ENCODE measurements at regions of chr17 and their contacts with region 1.

Region 1: GRCh38 chr17:76278952-76279741 is 14.0 kb downstream of the UBALD2 start:
- DNase-seq: peak; percentile 87 to 99 (median 92)
- ATAC-seq: peak; percentile 93 to 95 (median 93)
- H3K4me3 ChIP-seq: peak overlapping the region in 1 of 4 donors; percentile 19
- H3K27ac ChIP-seq: peak overlapping the region in 1 of 4 donors; percentile 46
- H3K4me1 ChIP-seq: peaks cover 0 to 7% (median 3%) of the 10 kb centered on the region in 3 donors
- H3K27me3 ChIP-seq: no peaks in the 10 kb centered on the region
- CTCF ChIP-seq: peak; percentile 95 to 99 (median 99)

Region 2: DNA sequence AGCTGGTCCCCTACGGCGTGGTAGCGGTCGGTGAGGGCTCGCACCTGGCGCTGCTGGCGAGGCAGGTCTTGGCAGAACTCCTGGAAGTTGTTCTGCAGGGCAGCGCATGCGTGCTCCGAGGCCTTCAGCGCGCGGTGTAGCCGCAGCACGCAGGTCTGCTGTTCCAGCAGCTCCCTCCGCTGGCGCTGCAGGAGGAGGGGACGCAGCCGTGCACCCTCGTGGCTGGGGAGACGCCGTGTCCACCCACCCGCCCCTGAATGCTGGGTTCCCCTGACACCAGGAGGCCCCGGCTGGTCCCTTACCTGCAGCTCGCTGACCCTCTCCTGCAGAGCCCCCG is 264.3 kb before region 1 on chr17:
- intact Hi-C with region 1: loop called in 1 of 3 experiments (anchors 5 kb)
- DNase-seq: peak in 1 of 6 donors; percentile 41
- ATAC-seq: peak; percentile 7 to 44 (median 14)
- H3K4me3 ChIP-seq: no peak overlapping the region
- H3K27ac ChIP-seq: no peak overlapping the region
- H3K4me1 ChIP-seq: no peaks in the 10 kb centered on the region
- H3K27me3 ChIP-seq: no peaks in the 10 kb centered on the region
- CTCF ChIP-seq: no peak

Region 3: GRCh38 chr17:76121932-76122430 is 157.2 kb before region 1 on chr17:
- intact Hi-C with region 1: loop called in 2 of 3 experiments (anchors 5 kb)
- DNase-seq: peak in 1 of 6 donors; percentile 75
- ATAC-seq: peak; percentile 46 to 60 (median 55)
- H3K4me3 ChIP-seq: peak overlapping the region in 2 of 4 donors; percentile 28 to 39
- H3K27ac ChIP-seq: no peak overlapping the region
- H3K4me1 ChIP-seq: peaks cover 0 to 4% (median 0%) of the 10 kb centered on the region in 3 donors
- H3K27me3 ChIP-seq: no peaks in the 10 kb centered on the region
- CTCF ChIP-seq: no peak

Region 4: DNA sequence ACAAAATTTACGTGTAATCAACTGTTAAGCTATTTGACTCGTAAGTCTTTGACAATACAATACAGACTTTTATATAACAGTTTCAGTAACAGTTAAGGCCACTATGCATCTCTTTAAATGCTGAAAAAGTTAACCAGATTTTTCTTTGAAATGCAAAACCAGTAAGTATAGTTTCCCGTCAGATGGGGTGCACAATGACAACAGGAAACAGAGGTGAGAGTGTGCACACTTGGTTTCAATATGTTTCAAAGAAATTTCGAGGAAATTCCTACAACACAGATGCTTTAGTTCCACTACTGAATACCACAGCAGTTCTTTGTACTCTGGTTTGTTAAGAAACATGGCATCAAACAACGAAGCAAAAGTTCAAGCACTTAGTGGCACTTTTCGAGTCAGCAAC is 87.3 kb before region 1 on chr17:
- intact Hi-C with region 1: no loop called
- DNase-seq: no peak
- ATAC-seq: peak in 1 of 4 donors; percentile 30
- H3K4me3 ChIP-seq: no peak overlapping the region
- H3K27ac ChIP-seq: no peak overlapping the region
- H3K4me1 ChIP-seq: no peaks in the 10 kb centered on the region
- H3K27me3 ChIP-seq: no peaks in the 10 kb centered on the region
- CTCF ChIP-seq: no peak

Region 5: GRCh38 chr17:76219670-76220383 is 59.3 kb before region 1 on chr17:
- intact Hi-C with region 1: loop called in 1 of 3 experiments (anchors 10 kb)
- DNase-seq: no peak
- ATAC-seq: no peak
- H3K4me3 ChIP-seq: no peak overlapping the region
- H3K27ac ChIP-seq: no peak overlapping the region
- H3K4me1 ChIP-seq: no peaks in the 10 kb centered on the region
- H3K27me3 ChIP-seq: no peaks in the 10 kb centered on the region
- CTCF ChIP-seq: no peak